ENCODE measurements at regions of chr10 and their contacts with region 1.

Region 1: DNA sequence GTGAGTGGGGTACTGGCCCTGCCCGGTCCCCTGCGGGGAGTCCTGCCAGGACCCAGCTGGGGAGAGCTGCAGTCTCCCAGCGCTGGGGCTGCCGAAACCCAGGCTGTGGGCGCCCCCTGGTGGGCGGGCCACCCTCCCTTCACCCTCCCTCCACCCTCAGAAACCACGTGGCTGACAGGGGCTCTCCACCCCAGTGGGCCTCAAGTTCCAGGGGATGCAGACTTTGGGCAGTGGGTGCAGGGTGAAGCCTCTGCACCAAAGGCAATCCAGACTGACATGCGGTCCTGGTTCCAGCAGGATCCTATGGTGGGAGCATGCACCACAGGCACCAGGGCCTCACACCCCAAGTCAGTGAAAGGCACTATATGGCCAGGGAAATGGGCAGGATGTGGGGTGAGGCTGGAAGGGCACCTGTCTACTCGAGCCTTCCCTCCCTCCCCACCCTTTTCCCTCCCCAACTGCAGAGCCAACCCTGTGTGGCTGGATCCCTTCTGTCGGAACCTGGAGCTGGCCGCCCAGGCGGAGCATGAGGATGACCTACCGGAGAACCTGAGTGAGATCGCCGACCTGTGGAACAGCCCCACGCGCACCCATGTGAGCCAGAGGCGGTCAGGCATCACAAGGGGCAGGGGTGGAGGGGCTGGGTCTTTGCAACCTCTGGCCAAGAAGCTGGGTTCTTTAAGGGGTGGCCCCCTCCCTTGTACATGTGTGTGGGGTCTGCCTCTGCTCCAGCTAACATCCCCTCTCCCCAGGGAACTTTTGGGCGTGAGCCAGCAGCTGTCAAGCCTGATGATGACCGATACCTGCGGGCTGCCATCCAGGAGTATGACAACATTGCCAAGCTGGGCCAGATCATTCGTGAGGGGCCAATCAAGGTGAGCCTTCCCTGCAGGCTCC is 38.8 kb downstream of the PSAP start:
- DNase-seq: peak in 1 of 2 experiments; percentile 87
- H3K4me3 ChIP-seq: no peak overlapping the region
- H3K27ac ChIP-seq: no peak overlapping the region
- H3K4me1 ChIP-seq: peaks cover 0 to 3% (median 0%) of the 10 kb centered on the region in 4 experiments; a peak in 1 of 7 replicates
- H3K27me3 ChIP-seq: no peaks in the 10 kb centered on the region
- CTCF ChIP-seq: peak; percentile 71 to 82 (median 79)
- EP300 ChIP-seq: no peak
- POLR2A ChIP-seq: no peak
- RAD21 ChIP-seq: peak; percentile 83 to 88

Region 2: DNA sequence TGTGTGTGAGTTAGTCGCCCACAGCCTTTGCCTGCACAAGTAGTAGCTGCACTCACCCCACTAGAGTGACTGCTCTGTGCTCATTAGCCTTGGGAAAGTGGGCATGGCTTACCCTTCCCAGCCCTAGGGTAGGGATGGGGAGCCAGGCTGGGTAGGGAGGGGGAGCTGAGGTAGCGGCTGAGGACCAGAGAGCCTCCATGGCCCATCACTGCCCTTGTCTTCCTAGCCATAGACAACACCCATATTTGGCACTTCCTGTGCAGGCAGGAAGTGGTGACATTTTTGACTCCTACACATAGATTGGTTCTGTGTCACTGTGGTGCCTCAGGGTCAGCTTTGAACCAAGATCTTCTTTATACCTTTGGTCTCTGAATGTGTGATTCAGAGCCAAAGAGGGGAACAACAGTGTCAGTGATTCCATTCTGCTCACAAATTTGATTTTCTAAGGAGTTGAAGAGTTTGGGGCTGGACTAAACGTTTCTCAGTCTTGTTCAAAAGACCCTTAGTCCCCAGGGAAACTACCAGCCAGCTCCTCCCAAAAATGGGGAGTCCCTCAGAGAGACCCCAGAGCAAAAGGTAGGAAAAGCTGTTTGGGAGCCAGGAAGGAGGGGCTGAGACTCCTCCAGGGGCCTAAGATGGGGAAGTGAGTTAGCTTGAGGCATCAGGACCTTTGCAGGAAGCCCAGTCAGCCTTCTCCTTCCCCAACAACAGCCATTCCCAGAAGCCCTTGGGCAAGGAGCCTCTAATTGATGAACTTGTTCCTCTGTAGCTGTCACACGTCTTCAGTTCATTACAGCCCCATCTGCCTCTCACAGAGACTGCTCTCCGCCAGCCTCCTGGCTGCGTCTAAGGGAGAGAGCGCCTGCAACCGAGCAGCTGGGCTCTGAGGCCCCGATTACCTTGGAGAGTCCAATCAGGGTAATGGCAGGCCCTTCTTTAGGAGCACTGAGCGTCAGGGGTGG is 280.5 kb before region 1 on chr10:
- CTCF ChIA-PET with region 1: no interaction called
- POLR2A ChIA-PET with region 1: no interaction called
- DNase-seq: no peak
- H3K4me3 ChIP-seq: no peak overlapping the region
- H3K27ac ChIP-seq: no peak overlapping the region
- H3K4me1 ChIP-seq: peaks cover 4 to 20% (median 16%) of the 10 kb centered on the region in 4 experiments
- H3K27me3 ChIP-seq: no peaks in the 10 kb centered on the region
- CTCF ChIP-seq: no peak
- EP300 ChIP-seq: no peak
- POLR2A ChIP-seq: no peak
- RAD21 ChIP-seq: no peak

Region 3: GRCh38 chr10:71761541-71762394 is 50.5 kb before region 1 on chr10:
- CTCF ChIA-PET with region 1: interaction called, 15 read pairs
- POLR2A ChIA-PET with region 1: no interaction called
- DNase-seq: no peak
- H3K4me3 ChIP-seq: no peak overlapping the region
- H3K27ac ChIP-seq: no peak overlapping the region
- H3K4me1 ChIP-seq: peaks cover 0 to 7% (median 4%) of the 10 kb centered on the region in 4 experiments; a peak in 4 of 7 replicates
- H3K27me3 ChIP-seq: no peaks in the 10 kb centered on the region; a peak in 1 of 7 replicates
- CTCF ChIP-seq: peak; percentile 69 to 80 (median 79)
- EP300 ChIP-seq: no peak
- POLR2A ChIP-seq: no peak
- RAD21 ChIP-seq: peak; percentile 54 to 72

Region 4: DNA sequence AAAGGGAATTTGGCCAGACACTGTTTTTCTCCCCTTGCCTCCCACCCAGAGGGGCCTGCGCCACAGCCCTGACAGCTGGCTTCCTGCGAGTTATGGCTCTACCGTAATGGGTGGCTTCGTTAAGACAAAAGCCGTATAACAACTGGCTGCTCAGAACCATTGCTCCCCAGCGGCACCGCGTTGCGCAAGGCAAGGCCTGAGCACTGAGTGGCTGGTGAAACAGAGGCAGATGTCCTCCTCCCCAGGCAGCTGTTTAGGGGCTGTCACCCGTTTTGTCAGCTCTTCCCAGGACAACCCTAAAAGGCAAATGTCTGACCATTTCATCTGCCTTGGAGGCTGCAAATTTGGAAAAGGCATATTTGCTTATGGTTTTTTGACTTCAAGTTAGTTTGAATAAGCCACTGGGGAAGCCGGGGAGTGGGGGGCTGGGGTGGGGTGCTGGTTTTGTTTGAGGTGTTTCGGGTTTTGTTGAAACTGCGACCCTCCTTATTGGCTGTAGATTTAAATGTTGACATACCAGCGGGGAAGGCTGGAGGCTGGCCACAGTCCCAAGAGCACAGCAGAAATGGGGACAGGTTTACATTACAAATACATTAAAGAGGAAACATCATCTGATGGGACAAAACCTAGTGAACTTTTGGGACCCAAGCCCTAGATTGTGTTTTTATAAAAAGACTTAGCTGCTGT is 276.8 kb after region 1 on chr10:
- CTCF ChIA-PET with region 1: no interaction called
- POLR2A ChIA-PET with region 1: no interaction called
- DNase-seq: peak in 1 of 2 experiments; percentile 62
- H3K4me3 ChIP-seq: peak overlapping the region; percentile 49 to 60 (median 54); a peak in 5 of 8 replicates
- H3K27ac ChIP-seq: no peak overlapping the region
- H3K4me1 ChIP-seq: peaks cover 3 to 22% (median 11%) of the 10 kb centered on the region in 4 experiments
- H3K27me3 ChIP-seq: peaks cover 19 to 50% (median 45%) of the 10 kb centered on the region in 4 experiments
- CTCF ChIP-seq: no peak
- EP300 ChIP-seq: no peak
- POLR2A ChIP-seq: no peak
- RAD21 ChIP-seq: no peak

Measured in H1 (cell line).